ENCODE measurements at regions of chr1 and their contacts with region 1.

Region 1: DNA sequence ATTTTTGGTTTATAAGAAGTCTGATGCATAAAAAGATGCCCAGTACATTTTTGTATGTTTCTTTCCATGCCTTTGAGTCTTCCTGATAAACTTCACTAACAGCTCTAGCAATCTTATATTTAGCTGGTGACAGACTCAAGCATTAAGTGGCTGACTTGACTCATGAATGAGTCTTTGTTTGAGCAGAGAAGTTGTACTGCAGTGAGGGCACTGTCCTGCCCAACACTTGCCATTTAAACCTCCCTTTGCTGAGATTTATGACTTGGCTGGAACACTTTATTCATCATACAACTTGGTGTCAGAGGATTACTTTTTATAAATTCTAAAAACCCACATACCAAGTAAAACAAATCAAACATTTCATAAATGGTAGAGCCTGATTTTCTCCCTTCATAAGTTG is 14.6 kb upstream of the CAMSAP2 start:
- DNase-seq: no peak

Region 2: DNA sequence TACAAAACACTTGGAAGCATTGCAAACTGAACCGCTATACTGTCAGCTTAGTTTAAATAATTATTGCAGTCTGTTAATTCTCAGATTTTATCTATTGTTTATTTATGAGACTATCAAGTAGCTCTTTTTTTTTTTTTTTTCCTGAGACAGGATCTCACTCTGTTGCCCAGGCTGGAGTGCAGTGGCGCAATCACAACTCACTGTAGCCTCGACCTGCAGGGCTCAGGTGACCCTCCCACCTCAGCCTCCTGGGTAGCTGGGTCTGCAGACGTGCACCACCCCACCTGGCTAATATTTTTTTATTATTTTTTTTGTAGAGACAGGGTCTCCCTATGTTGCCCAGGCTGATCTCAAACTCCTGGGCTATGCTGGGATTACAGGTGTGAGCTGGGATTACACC is 42.0 kb after region 1 on chr1:
- intact Hi-C with region 1: no loop called
- DNase-seq: no peak

Region 3: DNA sequence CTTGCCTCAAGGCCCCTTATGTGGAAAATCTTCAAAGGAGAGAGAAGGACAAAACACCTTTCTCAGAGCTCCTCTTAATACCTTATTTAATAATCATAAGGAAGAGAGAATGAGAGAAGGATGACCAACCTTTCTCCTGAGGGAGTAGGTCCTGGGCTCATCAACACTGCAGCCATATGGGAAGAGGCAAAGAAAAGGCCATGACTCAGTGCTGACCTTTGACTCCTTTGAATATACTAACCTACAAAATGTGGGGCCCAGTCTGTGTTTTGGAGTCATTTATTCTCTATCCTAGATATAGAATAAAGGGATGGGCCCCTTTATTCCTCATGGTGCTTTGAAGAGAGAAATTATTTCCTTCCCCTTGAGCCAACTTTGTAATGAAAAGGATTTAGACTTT is 52.9 kb after region 1 on chr1:
- intact Hi-C with region 1: loop called in 1 of 2 experiments (anchors 2 kb)
- DNase-seq: no peak